Colonic mucosa (tissue), 4 donors: ENCODE measurements at regions of chrX and their contacts with region 1.

Region 1: DNA sequence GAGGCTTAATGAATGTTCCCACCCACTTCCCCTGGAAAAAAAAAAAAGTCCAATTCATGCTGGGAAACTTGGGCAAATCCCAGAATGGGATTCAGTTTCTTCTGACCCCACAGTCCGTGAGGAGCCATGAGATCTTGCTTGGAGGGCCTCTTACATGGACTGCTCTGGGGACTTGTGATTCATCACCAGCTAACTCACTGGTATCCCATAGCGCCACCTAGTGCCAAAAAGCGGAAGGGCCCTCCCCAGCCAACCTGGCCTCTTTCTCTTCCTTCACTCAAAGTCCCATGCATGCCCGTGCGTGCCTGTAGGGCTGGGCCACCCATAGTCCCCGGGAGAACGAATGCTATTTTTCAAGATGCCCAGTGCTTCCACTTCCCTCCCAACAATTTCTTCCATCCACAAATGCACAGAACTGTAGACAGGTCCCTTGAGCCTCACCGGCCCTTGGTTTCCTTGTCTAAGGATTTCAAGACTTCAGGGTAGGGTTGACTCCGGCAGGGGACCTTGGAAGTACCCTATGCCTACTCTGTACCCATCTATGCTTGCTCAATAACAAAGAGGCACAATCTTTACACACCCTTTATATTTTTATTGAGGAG is 5.1 kb downstream of the RTL5 start:
- DNase-seq: peak; percentile 88
- H3K4me3 ChIP-seq: no peak overlapping the region
- H3K27ac ChIP-seq: no peak overlapping the region
- H3K4me1 ChIP-seq: no peaks in the 10 kb centered on the region
- H3K27me3 ChIP-seq: peaks cover 13% of the 10 kb centered on the region
- CTCF ChIP-seq: peak; percentile 83

Region 2: DNA sequence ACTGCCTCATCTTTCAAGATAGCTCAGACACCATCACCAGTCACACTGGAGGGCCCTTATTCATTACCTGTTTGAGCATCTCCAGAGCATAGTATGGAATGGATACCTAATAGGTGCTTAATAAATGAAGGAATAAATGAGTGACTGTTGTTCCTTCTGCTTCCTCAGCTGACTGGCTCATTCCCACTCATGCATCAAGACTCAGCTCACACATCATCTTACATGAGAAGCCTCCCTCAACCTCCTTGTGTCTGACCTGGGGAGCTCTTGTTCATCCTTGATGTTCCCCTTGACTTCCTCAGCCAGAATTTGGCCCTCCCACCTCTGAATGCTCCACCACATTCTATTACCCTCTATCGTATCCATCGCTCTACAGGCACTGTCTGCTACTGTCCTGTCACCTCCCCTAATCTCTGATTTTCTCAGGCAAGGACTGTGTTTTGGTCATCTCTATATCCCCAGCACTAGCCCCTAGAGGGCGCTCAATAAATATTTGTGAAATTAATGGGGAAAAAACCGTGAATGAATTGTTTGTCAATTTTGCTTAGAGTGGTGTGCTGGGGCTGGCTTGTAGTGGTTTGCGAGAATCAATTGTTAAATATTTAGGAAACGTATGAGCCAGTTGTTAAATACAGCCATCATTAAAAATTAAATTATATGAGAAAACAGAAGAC is 127.7 kb before region 1 on chrX:
- intact Hi-C with region 1: loop called (anchors 5 kb)
- DNase-seq: no peak
- H3K4me3 ChIP-seq: no peak overlapping the region
- H3K27ac ChIP-seq: no peak overlapping the region
- H3K4me1 ChIP-seq: no peaks in the 10 kb centered on the region
- H3K27me3 ChIP-seq: no peaks in the 10 kb centered on the region
- CTCF ChIP-seq: peak; percentile 51

Region 3: DNA sequence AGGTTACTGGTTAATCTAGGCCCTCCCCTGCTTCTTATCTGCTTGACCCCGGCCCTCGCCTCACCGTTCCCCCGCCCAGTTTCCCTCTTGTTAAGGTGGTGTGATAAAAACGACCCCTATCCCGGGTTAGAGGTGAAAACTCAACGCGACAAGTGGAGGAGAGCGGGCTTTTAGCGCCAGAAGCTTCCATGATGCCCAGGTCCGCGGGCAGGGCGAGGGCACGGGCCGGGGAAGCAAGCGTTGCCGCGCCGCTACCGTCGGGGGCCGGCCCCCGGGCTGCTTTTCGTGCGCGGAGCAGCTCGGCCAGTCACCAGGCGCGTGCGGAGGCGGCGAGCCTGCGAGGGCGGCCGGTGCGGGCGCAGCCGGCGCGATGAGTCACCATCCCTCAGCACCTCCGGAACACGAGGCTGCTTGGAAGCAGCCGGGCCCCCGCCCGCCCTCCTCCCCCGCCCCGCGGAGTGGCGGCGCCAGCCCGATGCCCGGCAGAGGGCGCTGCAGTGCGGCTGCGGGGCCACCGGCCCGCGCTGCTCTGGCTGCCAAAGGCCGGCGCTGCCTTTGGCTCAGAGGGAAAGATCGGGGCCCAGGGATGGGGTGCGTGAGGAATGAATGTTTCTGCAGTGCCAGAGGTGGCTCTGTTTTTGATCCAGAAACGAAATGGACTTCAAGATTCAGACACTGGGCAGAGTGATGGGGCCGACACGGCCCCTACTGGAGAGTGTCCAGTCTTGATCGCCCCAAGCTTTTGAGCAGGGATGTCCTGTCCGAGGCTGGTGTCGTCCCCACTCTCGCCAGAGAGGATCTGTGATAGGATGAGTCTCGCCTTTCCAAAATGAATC is 108.1 kb before region 1 on chrX:
- intact Hi-C with region 1: loop called (anchors 5 kb)
- DNase-seq: peak; percentile 65
- H3K4me3 ChIP-seq: no peak overlapping the region
- H3K27ac ChIP-seq: no peak overlapping the region
- H3K4me1 ChIP-seq: peaks cover 3% of the 10 kb centered on the region
- H3K27me3 ChIP-seq: no peaks in the 10 kb centered on the region
- CTCF ChIP-seq: peak; percentile 57